ENCODE measurements at regions of chr17 and their contacts with region 1.

Region 1: GRCh38 chr17:75153780-75154194 is 525 bp downstream of the JPT1 start:
- DNase-seq: peak; percentile 51
- ATAC-seq: no peak
- H3K4me3 Mint-ChIP-seq: peak overlapping the region; percentile 94
- H3K27ac Mint-ChIP-seq: peak overlapping the region; percentile 87
- H3K4me1 Mint-ChIP-seq: peaks cover 32% of the 10 kb centered on the region
- H3K27me3 Mint-ChIP-seq: no peaks in the 10 kb centered on the region
- CTCF ChIP-seq: no peak

Region 2: GRCh38 chr17:75010683-75011395 is 142.9 kb before region 1 on chr17:
- CTCF ChIA-PET with region 1: no interaction called
- POLR2A ChIA-PET with region 1: no interaction called
- intact Hi-C with region 1: no loop called
- DNase-seq: peak; percentile 31
- ATAC-seq: peak; percentile 5
- H3K4me3 Mint-ChIP-seq: peak overlapping the region; percentile 88
- H3K27ac Mint-ChIP-seq: peak overlapping the region; percentile 65
- H3K4me1 Mint-ChIP-seq: peaks cover 31% of the 10 kb centered on the region
- H3K27me3 Mint-ChIP-seq: no peaks in the 10 kb centered on the region
- CTCF ChIP-seq: no peak

Region 3: GRCh38 chr17:75048479-75048878 is 105.3 kb before region 1 on chr17:
- CTCF ChIA-PET with region 1: no interaction called
- POLR2A ChIA-PET with region 1: no interaction called
- intact Hi-C with region 1: no loop called
- DNase-seq: no peak
- ATAC-seq: no peak
- H3K4me3 Mint-ChIP-seq: peak overlapping the region; percentile 98
- H3K27ac Mint-ChIP-seq: no peak overlapping the region
- H3K4me1 Mint-ChIP-seq: peaks cover 40% of the 10 kb centered on the region
- H3K27me3 Mint-ChIP-seq: no peaks in the 10 kb centered on the region
- CTCF ChIP-seq: no peak

Region 4: GRCh38 chr17:75131280-75132017 is 22.3 kb before region 1 on chr17 and contains the start of gene NT5C:
- CTCF ChIA-PET with region 1: interaction called, 4 read pairs
- POLR2A ChIA-PET with region 1: interaction called, 12 read pairs
- intact Hi-C with region 1: no loop called
- DNase-seq: peak; percentile 86
- ATAC-seq: peak; percentile 83
- H3K4me3 Mint-ChIP-seq: peak within 1 kb of the TSS; percentile 86
- H3K27ac Mint-ChIP-seq: peak within 1 kb of the TSS; percentile 93
- H3K4me1 Mint-ChIP-seq: peaks cover 12% of the 10 kb centered on the region
- H3K27me3 Mint-ChIP-seq: no peaks in the 10 kb centered on the region
- CTCF ChIP-seq: peak; percentile 51
- total RNA-seq, gene NT5C: 66.1 to 68.1 TPM

Region 5: GRCh38 chr17:75182569-75183450 is 29.0 kb after region 1 on chr17 and contains the start of gene SUMO2:
- CTCF ChIA-PET with region 1: interaction called, 4 read pairs
- POLR2A ChIA-PET with region 1: interaction called, 9 read pairs
- intact Hi-C with region 1: loop called (anchors 2 kb)
- DNase-seq: peak; percentile 96
- ATAC-seq: peak; percentile 82
- H3K4me3 Mint-ChIP-seq: peak within 1 kb of the TSS; percentile 90
- H3K27ac Mint-ChIP-seq: peak within 1 kb of the TSS; percentile 97
- H3K4me1 Mint-ChIP-seq: peaks cover 39% of the 10 kb centered on the region
- H3K27me3 Mint-ChIP-seq: no peaks in the 10 kb centered on the region
- CTCF ChIP-seq: no peak
- total RNA-seq, gene SUMO2: 506 to 525 TPM

Region 6: GRCh38 chr17:75460936-75461335 is 307.1 kb after region 1 on chr17:
- CTCF ChIA-PET with region 1: no interaction called
- POLR2A ChIA-PET with region 1: no interaction called
- intact Hi-C with region 1: no loop called
- DNase-seq: no peak
- ATAC-seq: no peak
- H3K4me3 Mint-ChIP-seq: no peak overlapping the region
- H3K27ac Mint-ChIP-seq: no peak overlapping the region
- H3K4me1 Mint-ChIP-seq: peaks cover 19% of the 10 kb centered on the region
- H3K27me3 Mint-ChIP-seq: no peaks in the 10 kb centered on the region
- CTCF ChIP-seq: no peak